Activated CD8-positive, alpha-beta T cell treated with anti-CD3 and anti-CD28 coated beads, Interleukin-2, amount 10 ng/mL, durations not matched to agents 7 days and 5 days (primary cell): ENCODE measurements at regions of chr3 and their contacts with region 1.

Region 1: DNA sequence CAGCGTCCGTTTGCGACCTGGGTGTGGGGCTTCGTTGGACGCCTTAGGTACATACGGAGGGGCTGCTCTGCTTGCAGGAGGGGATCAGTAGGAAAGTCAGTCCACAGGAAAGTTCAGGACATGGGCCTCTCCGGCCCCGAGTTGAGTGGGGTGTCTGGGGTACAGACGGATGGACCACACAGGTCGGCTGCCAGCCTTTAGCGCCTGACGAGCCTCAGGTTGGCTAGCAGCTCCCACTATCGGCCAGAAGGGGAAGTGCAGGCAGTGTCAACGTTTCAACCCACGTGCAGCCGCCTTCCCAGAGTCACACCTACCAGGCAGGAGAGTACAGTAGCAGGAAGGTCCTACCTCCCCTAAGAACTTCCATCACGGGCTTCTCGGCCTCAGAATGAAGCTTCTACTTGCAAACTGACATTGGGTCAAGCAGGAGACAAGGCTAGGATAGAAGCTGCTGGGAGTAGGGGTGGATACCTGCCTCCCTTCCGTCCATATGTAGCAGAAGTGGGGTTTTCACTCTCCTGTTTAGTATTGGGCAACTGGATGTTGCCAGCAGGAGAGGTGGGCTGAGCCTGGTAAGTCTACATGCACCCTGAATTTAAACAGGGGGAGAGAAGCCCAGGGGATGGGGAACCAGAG is 1.8 kb upstream of the SCN5A start:
- DNase-seq: peak; percentile 80
- ATAC-seq: peak; percentile 57
- H3K4me3 Mint-ChIP-seq: no peak overlapping the region
- H3K27ac Mint-ChIP-seq: no peak overlapping the region
- H3K4me1 Mint-ChIP-seq: peaks cover 4% of the 10 kb centered on the region
- H3K27me3 Mint-ChIP-seq: peaks cover 17% of the 10 kb centered on the region

Region 2: DNA sequence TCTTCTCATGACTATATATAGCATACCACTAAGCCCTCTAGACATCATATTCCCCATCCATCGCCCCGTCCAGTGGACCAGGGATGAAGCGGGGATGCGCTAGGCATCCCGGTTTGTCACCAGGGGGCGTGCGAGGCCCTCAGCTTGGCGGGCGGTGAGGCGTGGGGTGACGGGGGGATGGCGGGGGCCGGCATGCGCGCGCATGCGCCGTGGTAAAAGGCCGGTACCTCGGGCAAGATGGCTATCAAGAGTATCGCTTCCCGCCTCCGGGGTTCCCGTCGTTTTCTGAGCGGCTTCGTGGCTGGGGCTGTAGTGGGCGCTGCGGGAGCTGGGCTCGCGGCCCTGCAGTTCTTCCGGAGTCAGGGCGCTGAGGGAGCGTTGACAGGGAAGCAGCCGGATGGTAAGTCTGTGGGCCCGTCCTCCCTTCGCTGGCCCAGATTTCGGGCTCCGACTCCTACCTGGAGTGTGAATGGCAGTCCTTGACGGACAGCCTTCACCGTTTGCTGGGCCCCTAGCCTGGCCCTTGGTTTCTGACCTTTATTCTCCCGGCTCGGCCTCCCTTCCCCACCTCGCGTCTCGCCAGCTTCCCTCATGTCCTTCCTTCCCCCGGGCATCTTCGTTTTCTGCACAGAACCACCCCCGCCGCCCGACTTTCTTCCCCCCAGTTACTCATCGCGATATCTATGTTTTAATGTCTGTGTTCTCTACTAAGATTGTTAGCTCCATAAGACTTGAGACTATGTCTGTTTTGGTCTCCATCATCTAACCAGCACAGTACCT is 155.0 kb before region 1 on chr3 and contains the start of gene EXOG:
- CTCF ChIA-PET with region 1: interaction called, 18 read pairs
- POLR2A ChIA-PET with region 1: interaction called, 4 read pairs
- DNase-seq: peak; percentile 97
- ATAC-seq: peak; percentile 94
- H3K4me3 Mint-ChIP-seq: peak within 1 kb of the TSS; percentile 89
- H3K27ac Mint-ChIP-seq: peak within 1 kb of the TSS; percentile 86
- H3K4me1 Mint-ChIP-seq: peaks cover 26% of the 10 kb centered on the region
- H3K27me3 Mint-ChIP-seq: no peaks in the 10 kb centered on the region
- total RNA-seq, gene EXOG: 18.5 to 23.0 TPM

Region 3: GRCh38 chr3:38662544-38662943 is 11.3 kb after region 1 on chr3:
- CTCF ChIA-PET with region 1: interaction called, 15 read pairs
- POLR2A ChIA-PET with region 1: no interaction called
- DNase-seq: no peak
- ATAC-seq: no peak
- H3K4me3 Mint-ChIP-seq: no peak overlapping the region
- H3K27ac Mint-ChIP-seq: no peak overlapping the region
- H3K4me1 Mint-ChIP-seq: no peaks in the 10 kb centered on the region
- H3K27me3 Mint-ChIP-seq: peaks cover 30% of the 10 kb centered on the region

Region 4: DNA sequence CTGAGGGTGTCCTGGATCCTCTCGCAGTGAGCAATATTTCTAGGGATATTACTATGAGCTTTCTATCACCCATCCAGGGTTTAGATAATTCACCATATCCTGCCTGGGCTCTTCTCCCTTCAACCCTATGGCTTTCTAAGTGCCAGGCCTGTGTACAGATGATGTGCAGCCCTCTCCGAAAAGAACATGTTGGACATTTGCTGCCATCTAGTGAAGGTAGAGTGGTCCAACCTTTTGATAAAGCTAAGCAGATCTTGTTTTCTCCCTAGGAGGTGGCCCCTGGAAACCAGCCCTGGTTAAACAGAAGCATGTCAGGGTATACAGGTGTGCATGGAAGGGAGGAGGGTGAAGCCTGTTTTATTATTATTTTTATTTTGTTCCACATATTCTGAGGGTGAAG is 192.6 kb after region 1 on chr3:
- CTCF ChIA-PET with region 1: interaction called, 13 read pairs
- POLR2A ChIA-PET with region 1: no interaction called
- DNase-seq: peak; percentile 27
- ATAC-seq: peak; percentile 42
- H3K4me3 Mint-ChIP-seq: no peak overlapping the region
- H3K27ac Mint-ChIP-seq: no peak overlapping the region
- H3K4me1 Mint-ChIP-seq: no peaks in the 10 kb centered on the region
- H3K27me3 Mint-ChIP-seq: peaks cover 16% of the 10 kb centered on the region